Endothelial cell of umbilical vein (primary cell): ENCODE measurements at regions of chr1 and their contacts with region 1.

Region 1: DNA sequence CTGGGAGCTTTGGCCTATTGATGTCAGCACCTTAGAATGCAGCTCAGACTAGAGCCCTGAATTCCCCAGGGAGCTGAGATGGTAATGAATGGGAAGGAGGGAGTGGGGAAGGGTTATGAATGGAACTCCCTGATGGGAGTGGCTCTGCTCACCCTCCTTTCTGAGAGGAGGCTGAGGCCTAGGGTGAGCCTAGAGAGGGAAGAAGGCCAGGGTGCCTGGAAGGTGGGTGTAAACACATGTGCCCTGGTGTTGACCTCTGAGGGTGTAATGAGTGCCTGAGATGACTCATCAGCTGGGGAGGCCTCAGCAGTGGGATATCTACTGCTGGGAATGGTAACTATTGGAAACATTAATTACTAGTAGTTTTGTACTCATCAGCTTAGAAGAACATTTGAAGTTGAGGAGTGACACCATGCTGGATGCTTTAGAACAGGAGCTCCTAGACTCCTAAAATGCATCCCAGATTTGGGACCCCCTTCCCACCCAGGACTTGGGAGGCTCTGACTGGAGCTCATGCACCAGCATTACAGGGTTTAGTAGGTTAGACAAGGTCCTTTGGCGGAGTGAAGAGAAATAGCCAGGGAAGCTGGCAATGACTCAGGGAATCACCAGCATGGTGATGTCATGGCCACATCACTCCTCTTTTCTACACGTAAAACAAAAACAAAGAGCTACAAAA is 16.0 kb upstream of the PIGV start:
- DNase-seq: peak; percentile 75
- H3K4me3 ChIP-seq: no peak overlapping the region
- H3K27ac ChIP-seq: peak overlapping the region; percentile 87
- H3K4me1 ChIP-seq: peaks cover 40% of the 10 kb centered on the region
- H3K27me3 ChIP-seq: no peaks in the 10 kb centered on the region
- CTCF ChIP-seq: no peak
- POLR2A ChIP-seq: peak; percentile 30

Region 2: DNA sequence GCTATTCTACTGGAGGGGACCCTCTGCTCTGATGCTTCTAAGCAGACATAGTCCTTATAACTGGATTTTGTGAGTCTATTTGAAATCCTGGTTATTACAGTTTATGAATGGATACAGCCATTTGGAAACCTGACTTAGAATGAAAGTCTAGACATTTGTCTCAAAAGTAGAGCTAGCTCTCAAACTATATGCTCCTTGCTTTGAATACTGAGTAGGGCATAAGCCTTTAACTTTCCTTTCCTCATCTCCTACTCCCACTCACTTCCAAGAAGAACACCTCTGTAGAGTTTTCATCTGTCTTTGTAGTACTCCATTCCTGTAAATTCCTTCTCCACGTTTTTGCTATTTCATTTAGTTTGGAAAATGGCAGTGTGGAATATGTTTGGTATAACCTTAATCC is 85.0 kb before region 1 on chr1:
- CTCF ChIA-PET with region 1: no interaction called
- POLR2A ChIA-PET with region 1: no interaction called
- dilution Hi-C with region 1: no loop called
- intact Hi-C with region 1: no loop called
- DNase-seq: no peak
- H3K4me3 ChIP-seq: no peak overlapping the region
- H3K27ac ChIP-seq: no peak overlapping the region
- H3K4me1 ChIP-seq: no peaks in the 10 kb centered on the region
- H3K27me3 ChIP-seq: no peaks in the 10 kb centered on the region
- CTCF ChIP-seq: no peak
- POLR2A ChIP-seq: no peak

Region 3: GRCh38 chr1:26744075-26744959 is 27.5 kb before region 1 on chr1:
- CTCF ChIA-PET with region 1: interaction called, 3 read pairs
- POLR2A ChIA-PET with region 1: interaction called, 4 read pairs
- dilution Hi-C with region 1: no loop called
- intact Hi-C with region 1: loop called (anchors 1 kb)
- DNase-seq: peak; percentile 98
- H3K4me3 ChIP-seq: peak overlapping the region in 1 of 3 experiments; percentile 35
- H3K27ac ChIP-seq: peak overlapping the region; percentile 82
- H3K4me1 ChIP-seq: peaks cover 27% of the 10 kb centered on the region
- H3K27me3 ChIP-seq: no peaks in the 10 kb centered on the region
- CTCF ChIP-seq: no peak
- POLR2A ChIP-seq: peak; percentile 25

Region 4: GRCh38 chr1:26752519-26752918 is 19.3 kb before region 1 on chr1:
- CTCF ChIA-PET with region 1: interaction called, 4 read pairs
- POLR2A ChIA-PET with region 1: no interaction called
- dilution Hi-C with region 1: no loop called
- intact Hi-C with region 1: loop called (anchors 1 kb)
- DNase-seq: peak; percentile 75
- H3K4me3 ChIP-seq: no peak overlapping the region
- H3K27ac ChIP-seq: peak overlapping the region; percentile 16
- H3K4me1 ChIP-seq: peaks cover 25% of the 10 kb centered on the region
- H3K27me3 ChIP-seq: no peaks in the 10 kb centered on the region
- CTCF ChIP-seq: no peak
- POLR2A ChIP-seq: no peak